ENCODE measurements at regions of chr10 and their contacts with region 1.

Region 1: DNA sequence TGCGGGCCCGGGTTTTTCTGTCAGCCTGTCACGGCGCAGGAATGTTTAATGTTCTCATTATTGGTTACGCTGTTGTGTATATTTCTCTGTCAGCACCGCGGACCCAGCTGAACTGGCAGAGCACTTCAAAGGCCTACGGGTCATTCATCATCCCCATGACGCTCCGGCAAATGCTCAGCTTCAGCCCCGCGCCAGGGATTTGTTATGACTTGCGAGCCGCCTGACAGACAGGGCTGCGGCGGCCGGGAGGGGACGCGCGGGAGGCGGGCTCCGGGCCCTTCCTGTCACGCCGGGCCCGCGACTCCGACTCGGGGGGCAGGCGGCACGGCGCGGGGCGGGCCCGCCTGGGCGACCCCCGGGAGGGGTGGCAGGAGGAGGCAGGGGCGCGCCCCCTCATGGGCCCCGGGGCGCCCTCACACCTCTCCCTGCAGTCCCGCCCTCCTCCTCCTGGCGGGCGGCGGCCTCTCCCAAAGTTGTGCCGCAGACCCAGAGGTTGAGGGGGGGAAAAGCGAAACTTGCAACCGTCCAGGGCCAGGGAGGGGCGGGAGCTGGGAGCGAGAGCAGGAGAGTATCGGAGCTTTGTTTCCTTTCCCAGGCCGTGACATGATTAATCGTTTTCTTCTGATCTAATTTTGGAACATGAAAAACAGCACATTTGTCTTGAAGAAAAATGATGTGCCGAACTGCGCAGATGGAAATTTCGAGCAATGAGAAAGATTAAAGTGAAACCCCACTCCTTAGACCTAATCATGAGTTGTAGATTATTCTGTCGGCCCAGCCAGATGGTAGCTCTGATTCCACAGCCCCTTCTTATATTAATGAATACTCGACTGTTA is 59.3 kb upstream of the COMTD1 start:
- DNase-seq: peak; percentile 93
- ATAC-seq: peak; percentile 78
- H3K4me3 ChIP-seq: peak overlapping the region; percentile 32
- H3K27ac ChIP-seq: peak overlapping the region; percentile 18
- H3K4me1 ChIP-seq: peaks cover 24% of the 10 kb centered on the region
- H3K27me3 ChIP-seq: no peaks in the 10 kb centered on the region; the same call in 1 of the 2 replicates
- CTCF ChIP-seq: peak; percentile 18; the same call in 1 of the 2 replicates
- POLR2A ChIP-seq: no peak
- RAD21 ChIP-seq: peak; percentile 16; the same call in 1 of the 2 replicates

Region 2: DNA sequence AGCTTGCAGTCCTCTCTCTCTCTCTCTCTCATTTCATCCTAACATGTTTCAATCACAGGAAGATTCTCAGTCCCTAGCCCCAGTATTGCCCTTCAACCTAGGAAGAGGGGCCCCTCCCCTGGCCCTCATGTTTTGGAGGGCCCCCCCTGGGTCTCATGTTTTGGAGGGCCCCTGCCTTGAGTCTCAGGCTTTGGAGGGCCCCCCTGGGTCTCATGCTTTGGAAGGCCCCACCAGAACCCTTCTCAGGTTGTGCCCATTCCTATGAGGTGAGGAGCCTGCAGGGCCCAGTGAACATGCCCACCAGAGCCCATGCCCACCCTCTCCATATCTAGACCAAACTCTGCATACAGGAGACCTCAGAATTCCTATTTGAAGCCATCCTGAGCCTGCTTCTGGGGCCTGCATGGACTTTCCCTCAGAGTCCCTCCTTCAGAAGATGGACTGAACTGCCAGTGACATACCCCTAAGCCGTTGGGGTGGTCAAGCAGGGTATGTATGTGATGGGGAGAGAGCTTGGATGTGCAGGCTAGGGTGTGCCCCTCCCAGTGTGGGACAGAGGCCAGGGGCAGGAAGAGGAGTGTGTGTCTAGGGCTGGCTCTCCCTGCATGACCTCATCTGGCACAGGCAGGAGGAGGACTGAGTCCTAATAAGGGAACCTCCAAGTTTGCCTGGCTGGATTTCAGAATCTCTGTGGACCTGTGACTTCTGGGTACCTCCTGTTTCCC is 92.6 kb before region 1 on chr10:
- CTCF ChIA-PET with region 1: no interaction called
- POLR2A ChIA-PET with region 1: no interaction called
- dilution Hi-C with region 1: no loop called
- in situ Hi-C with region 1: no loop called
- intact Hi-C with region 1: no loop called
- DNase-seq: peak; percentile 70
- ATAC-seq: peak; percentile 98
- H3K4me3 ChIP-seq: no peak overlapping the region
- H3K27ac ChIP-seq: peak overlapping the region; percentile 23
- H3K4me1 ChIP-seq: peaks cover 12% of the 10 kb centered on the region
- H3K27me3 ChIP-seq: no peaks in the 10 kb centered on the region
- CTCF ChIP-seq: no peak
- POLR2A ChIP-seq: no peak
- RAD21 ChIP-seq: no peak

Region 3: DNA sequence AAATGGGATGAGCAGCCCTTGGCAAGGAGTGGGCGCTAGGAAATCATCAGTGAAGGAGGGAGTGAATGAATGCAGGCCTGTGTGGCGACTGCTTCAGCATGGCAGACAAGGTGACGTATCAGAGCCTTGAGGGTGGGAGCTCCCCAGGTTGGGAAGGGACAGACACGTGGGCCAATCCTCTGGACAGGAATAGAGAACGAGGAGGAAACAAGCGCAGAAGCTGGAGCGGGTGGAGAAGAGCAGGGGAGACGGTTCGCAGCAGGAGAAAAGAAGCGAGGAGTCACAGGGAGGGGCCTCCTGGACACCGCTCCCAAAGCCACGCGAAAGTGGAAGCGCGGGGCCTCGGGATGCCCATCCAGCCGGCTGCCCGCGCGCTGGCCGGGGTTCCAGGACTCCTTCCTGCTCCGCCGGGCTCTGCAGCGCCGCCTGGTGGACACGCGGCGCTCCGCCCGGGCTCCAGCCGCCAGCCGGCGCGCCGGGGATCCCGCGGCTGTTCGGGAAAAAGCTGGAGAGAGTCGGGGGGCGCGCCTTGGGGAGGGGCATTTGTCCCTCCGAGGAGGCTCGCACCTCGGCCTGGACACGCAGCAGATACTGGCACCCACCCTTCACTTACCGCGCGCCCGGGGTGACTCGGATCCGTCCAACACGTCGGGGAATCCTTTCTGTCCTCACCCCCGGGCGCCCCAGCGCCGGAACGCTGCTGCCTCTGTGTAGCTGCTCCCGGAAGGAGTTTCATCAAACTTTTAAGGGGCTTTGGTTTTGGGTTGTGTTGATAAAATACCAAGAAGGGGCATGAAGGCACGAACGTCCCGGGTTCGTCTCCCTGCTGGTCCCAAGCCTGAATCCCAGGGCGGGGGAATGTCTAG is 100.2 kb after region 1 on chr10:
- CTCF ChIA-PET with region 1: interaction called, 7 read pairs
- POLR2A ChIA-PET with region 1: no interaction called
- dilution Hi-C with region 1: no loop called
- in situ Hi-C with region 1: loop called (anchors 10 kb)
- intact Hi-C with region 1: loop called (anchors 1 kb)
- DNase-seq: peak; percentile 48
- ATAC-seq: peak; percentile 51
- H3K4me3 ChIP-seq: peak overlapping the region; percentile 99
- H3K27ac ChIP-seq: peak overlapping the region; percentile 98
- H3K4me1 ChIP-seq: peaks cover 13% of the 10 kb centered on the region; the same call in 1 of the 2 replicates
- H3K27me3 ChIP-seq: no peaks in the 10 kb centered on the region
- CTCF ChIP-seq: peak; percentile 80
- POLR2A ChIP-seq: no peak
- RAD21 ChIP-seq: peak; percentile 68

Region 4: DNA sequence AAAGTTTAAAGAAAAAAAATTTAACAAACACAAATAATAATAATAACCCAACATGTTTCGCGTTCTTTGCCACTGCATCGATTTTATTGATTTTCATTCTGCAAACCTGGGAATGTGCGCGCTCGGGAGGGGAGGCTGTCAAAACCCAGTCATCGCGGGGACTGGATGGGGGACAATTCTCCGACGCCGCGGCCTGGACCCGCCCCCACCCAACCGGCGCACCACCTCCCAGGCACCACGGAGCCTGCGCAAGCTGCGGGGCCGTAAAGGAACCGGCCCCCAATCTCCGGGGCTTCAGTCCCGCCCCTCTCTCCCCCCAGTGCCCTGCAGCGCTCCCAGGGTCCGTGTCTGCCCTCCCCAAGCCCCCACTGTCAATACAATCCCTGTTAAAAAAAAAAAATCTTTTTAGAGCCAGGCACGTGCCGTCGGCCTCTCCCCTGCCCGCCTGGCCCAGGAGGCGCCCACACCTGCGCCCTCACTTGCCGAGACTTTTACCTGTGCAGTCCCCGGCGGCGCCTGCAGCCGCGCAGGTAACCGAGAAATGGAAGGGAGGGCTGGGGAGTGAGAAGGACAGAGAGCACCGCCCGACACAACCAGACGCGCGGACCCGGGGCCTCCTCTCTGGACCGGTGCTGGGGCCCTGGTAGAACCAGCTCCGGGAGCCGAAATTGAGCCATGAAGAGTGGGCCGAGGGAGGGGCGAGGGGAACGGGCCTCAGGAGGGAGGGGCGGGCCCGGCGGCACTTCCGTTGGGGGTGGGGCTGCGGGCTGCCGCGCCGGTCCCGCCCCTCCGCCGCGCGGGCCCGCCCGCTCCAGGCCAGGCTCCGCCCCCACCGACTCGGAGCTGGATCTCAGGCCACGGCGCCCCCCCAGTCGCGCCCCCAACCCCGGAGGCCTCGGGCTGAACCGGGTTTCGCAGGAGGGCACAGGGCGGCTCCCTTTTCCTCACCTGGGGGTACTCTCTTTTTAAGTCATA is 114.1 kb after region 1 on chr10:
- CTCF ChIA-PET with region 1: no interaction called
- POLR2A ChIA-PET with region 1: no interaction called
- dilution Hi-C with region 1: no loop called
- in situ Hi-C with region 1: no loop called
- intact Hi-C with region 1: no loop called
- DNase-seq: no peak
- ATAC-seq: peak; percentile 92
- H3K4me3 ChIP-seq: peak overlapping the region; percentile 89
- H3K27ac ChIP-seq: peak overlapping the region; percentile 12; the same call in 1 of the 2 replicates
- H3K4me1 ChIP-seq: no peaks in the 10 kb centered on the region; the same call in 1 of the 2 replicates
- H3K27me3 ChIP-seq: peaks cover 15% of the 10 kb centered on the region
- CTCF ChIP-seq: no peak
- POLR2A ChIP-seq: 0 out of 2 replicates have a peak, but pooled peaks have one; percentile 17
- RAD21 ChIP-seq: no peak

Region 5: GRCh38 chr10:75814014-75814413 is 518.9 kb after region 1 on chr10:
- CTCF ChIA-PET with region 1: no interaction called
- POLR2A ChIA-PET with region 1: no interaction called
- dilution Hi-C with region 1: no loop called
- in situ Hi-C with region 1: no loop called
- intact Hi-C with region 1: no loop called
- DNase-seq: no peak
- ATAC-seq: no peak
- H3K4me3 ChIP-seq: no peak overlapping the region
- H3K27ac ChIP-seq: no peak overlapping the region
- H3K4me1 ChIP-seq: no peaks in the 10 kb centered on the region
- H3K27me3 ChIP-seq: 0 out of 2 replicates have a peak, but pooled peaks cover 1% of the 10 kb centered on the region
- CTCF ChIP-seq: no peak
- POLR2A ChIP-seq: no peak
- RAD21 ChIP-seq: no peak

Region 6: GRCh38 chr10:76778914-76779795 is 1484.1 kb after region 1 on chr10:
- CTCF ChIA-PET with region 1: no interaction called
- POLR2A ChIA-PET with region 1: no interaction called
- dilution Hi-C with region 1: no loop called
- in situ Hi-C with region 1: no loop called
- intact Hi-C with region 1: loop called (anchors 5 kb)
- DNase-seq: peak; percentile 23
- ATAC-seq: peak; percentile 91
- H3K4me3 ChIP-seq: no peak overlapping the region
- H3K27ac ChIP-seq: no peak overlapping the region
- H3K4me1 ChIP-seq: no peaks in the 10 kb centered on the region
- H3K27me3 ChIP-seq: no peaks in the 10 kb centered on the region; the same call in 1 of the 2 replicates
- CTCF ChIP-seq: 0 out of 2 replicates have a peak, but pooled peaks have one; percentile 10
- POLR2A ChIP-seq: no peak
- RAD21 ChIP-seq: no peak

Measured in IMR-90 (cell line).